Activated T-helper 2 cell treated with anti-CD3 and anti-CD28 coated beads, Interferon-gamma antibody, Interleukin-2, Interleukin-4, amounts not matched to agents 10 μg/mL and 5 μg/mL and 100 μg/mL, durations not matched to agents 14 hours and 24 hours and 36 hours (primary cell): ENCODE measurements at regions of chrX and their contacts with region 1.

Region 1: GRCh38 chrX:134969726-134970125 is 21.1 kb upstream of the SMIM10 start:
- DNase-seq: no peak
- H3K4me3 Mint-ChIP-seq: no peak overlapping the region
- H3K27ac Mint-ChIP-seq: no peak overlapping the region
- H3K4me1 Mint-ChIP-seq: no peaks in the 10 kb centered on the region
- H3K27me3 Mint-ChIP-seq: peaks cover 3% of the 10 kb centered on the region

Region 2: DNA sequence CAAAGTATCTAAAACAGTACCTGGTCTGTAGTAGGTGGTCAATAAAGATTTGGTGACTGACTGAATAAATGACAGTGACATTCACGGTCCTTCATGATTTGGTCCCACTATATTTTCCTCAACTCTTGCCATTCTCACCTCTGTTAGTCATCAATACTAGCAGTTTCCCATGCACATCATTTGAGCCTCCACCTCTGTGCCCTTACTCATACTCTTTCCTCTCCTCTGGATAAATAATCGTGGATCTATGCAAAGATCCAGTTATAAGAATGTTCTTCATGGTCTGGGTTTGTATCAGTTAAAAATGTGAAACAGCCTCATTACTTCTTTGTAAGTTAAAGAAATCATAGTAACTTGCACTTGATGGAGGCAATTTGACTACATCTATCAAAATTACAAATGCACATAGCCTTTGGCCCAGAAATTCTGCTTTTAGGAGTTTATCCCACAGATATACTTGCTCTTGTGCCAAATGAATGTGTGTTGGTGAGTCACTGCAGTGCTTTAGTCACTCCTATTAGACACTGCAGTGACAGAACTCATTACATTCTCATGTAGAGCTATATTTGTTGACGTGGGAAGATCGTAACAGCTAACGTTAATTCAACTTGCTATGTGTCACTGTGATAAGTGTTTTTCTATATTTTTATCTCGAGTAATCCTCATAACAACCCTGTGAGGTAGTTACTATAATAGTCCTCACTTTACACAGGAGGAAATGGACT is 100.8 kb before region 1 on chrX:
- intact Hi-C with region 1: no loop called
- DNase-seq: no peak
- H3K4me3 Mint-ChIP-seq: no peak overlapping the region
- H3K27ac Mint-ChIP-seq: no peak overlapping the region
- H3K4me1 Mint-ChIP-seq: peaks cover 2% of the 10 kb centered on the region
- H3K27me3 Mint-ChIP-seq: no peaks in the 10 kb centered on the region

Region 3: GRCh38 chrX:134898440-134898839 is 71.3 kb before region 1 on chrX:
- intact Hi-C with region 1: no loop called
- DNase-seq: no peak
- H3K4me3 Mint-ChIP-seq: no peak overlapping the region
- H3K27ac Mint-ChIP-seq: no peak overlapping the region
- H3K4me1 Mint-ChIP-seq: no peaks in the 10 kb centered on the region
- H3K27me3 Mint-ChIP-seq: no peaks in the 10 kb centered on the region

Region 4: DNA sequence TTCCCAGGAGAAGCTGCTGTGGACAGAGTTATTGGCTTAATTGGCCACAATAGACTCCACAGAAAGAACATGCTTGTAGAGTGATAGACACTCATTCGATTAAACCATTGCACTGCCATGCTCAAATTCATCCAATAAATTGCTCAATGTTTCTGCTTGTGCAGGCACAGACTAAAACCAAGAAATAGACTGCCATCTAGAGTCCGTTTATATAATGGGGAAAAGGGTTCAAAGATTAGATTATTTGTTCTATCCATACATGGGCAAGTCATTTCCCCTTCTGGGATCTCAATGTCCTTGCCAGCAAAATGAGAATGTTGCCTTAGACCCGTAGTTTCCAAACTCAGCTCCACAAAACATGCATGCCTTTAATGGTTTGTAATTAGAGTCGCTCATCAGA is 29.7 kb after region 1 on chrX:
- intact Hi-C with region 1: loop called (anchors 1 kb)
- DNase-seq: no peak
- H3K4me3 Mint-ChIP-seq: no peak overlapping the region
- H3K27ac Mint-ChIP-seq: no peak overlapping the region
- H3K4me1 Mint-ChIP-seq: peaks cover 10% of the 10 kb centered on the region
- H3K27me3 Mint-ChIP-seq: no peaks in the 10 kb centered on the region

Region 5: DNA sequence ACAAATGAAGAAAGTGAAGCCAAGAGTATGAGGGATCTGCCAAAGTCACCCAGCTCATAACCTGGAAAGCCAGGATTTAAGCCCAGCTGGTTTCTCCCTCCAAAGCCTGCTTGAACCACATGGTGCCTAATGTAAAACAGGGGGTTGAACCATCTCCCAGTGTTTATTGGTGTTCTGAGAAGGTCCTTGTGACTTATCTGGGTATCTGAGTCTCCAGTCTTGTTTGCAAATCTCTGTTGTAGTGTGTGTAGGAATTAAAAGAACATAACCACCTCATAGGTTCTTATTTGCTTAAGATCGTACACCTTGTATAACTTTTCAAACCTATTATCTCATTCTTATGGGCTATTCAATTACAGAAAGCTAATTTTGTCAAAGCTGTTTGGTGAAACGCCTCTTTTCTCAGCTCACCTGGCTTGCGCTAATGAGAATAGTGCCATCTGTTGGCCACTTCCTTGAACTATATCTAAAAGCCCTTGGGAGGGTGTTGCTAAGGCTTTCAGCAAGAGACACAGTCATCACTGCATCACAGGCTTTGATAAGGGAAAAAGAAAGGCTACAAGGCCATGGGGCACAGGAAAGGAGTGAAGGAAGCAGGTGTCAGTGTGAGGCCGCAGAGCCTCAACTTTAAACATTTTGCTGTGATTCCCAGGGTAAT is 116.6 kb after region 1 on chrX:
- intact Hi-C with region 1: loop called (anchors 1 kb)
- DNase-seq: peak; percentile 39
- H3K4me3 Mint-ChIP-seq: no peak overlapping the region
- H3K27ac Mint-ChIP-seq: no peak overlapping the region
- H3K4me1 Mint-ChIP-seq: peaks cover 4% of the 10 kb centered on the region
- H3K27me3 Mint-ChIP-seq: peaks cover 8% of the 10 kb centered on the region